Psoas muscle (tissue), 8 donors: ENCODE measurements at regions of chr1 and their contacts with region 1.

Region 1: GRCh38 chr1:178310685-178311105 is 186.1 kb downstream of the CLEC20A start:
- DNase-seq: no peak
- ATAC-seq: peak; percentile 87 to 97 (median 92)
- H3K4me3 ChIP-seq: no peak overlapping the region
- H3K27ac ChIP-seq: no peak overlapping the region
- H3K4me1 ChIP-seq: peaks cover 13% of the 10 kb centered on the region
- H3K27me3 ChIP-seq: no peaks in the 10 kb centered on the region
- CTCF ChIP-seq: peak; percentile 79

Region 2: DNA sequence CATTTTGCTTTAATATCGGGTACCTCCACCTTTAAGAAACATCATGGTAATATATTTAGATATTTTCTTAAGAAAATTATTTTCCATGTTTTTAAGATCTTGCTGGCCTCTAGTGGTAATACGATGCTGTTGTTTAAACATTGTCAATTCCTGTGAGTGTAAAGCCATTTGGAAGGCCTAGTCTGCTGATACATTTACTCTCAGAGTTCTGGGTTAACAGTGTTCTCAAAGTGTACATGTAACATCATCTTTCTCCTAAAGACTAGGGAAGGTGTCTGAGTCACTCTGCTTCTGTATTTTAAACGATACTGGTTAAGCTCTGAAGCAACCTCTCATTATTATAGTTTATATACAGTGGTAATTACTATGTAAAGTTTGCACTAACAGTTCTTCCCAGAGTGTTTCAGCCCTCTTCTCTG is 27.7 kb before region 1 on chr1:
- intact Hi-C with region 1: no loop called
- DNase-seq: no peak
- ATAC-seq: peak in 1 of 4 donors; percentile 37
- H3K4me3 ChIP-seq: no peak overlapping the region
- H3K27ac ChIP-seq: no peak overlapping the region
- H3K4me1 ChIP-seq: no peaks in the 10 kb centered on the region
- H3K27me3 ChIP-seq: no peaks in the 10 kb centered on the region
- CTCF ChIP-seq: peak; percentile 46

Region 3: DNA sequence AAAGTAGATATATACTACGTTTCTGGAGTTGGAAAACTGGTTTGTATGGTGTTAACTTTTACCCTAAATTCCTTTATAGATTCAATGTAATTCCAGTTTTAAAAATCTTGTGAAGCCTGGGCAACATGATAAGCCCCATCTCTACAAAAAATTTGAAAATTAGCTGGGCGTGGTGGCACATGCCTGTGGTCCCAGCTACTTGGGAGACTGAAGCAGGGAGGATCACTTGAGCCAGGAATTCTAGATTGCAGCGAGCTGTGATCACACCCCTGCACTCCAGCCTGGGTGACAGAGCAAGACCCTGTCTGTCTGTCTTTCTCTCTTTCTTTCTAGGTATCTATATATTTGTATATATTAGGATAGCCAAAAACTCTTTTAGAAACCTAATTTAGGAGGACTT is 44.1 kb after region 1 on chr1:
- intact Hi-C with region 1: loop called in 1 of 2 experiments (anchors 5 kb)
- DNase-seq: no peak
- ATAC-seq: no peak
- H3K4me3 ChIP-seq: no peak overlapping the region
- H3K27ac ChIP-seq: no peak overlapping the region
- H3K4me1 ChIP-seq: no peaks in the 10 kb centered on the region
- H3K27me3 ChIP-seq: no peaks in the 10 kb centered on the region
- CTCF ChIP-seq: no peak

Region 4: GRCh38 chr1:178371235-178371634 is 60.5 kb after region 1 on chr1:
- intact Hi-C with region 1: loop called in 1 of 2 experiments (anchors 5 kb)
- DNase-seq: no peak
- ATAC-seq: peak in 3 of 4 donors; percentile 43 to 75 (median 56)
- H3K4me3 ChIP-seq: peak overlapping the region; percentile 62
- H3K27ac ChIP-seq: no peak overlapping the region
- H3K4me1 ChIP-seq: peaks cover 25% of the 10 kb centered on the region
- H3K27me3 ChIP-seq: no peaks in the 10 kb centered on the region
- CTCF ChIP-seq: no peak

Region 5: DNA sequence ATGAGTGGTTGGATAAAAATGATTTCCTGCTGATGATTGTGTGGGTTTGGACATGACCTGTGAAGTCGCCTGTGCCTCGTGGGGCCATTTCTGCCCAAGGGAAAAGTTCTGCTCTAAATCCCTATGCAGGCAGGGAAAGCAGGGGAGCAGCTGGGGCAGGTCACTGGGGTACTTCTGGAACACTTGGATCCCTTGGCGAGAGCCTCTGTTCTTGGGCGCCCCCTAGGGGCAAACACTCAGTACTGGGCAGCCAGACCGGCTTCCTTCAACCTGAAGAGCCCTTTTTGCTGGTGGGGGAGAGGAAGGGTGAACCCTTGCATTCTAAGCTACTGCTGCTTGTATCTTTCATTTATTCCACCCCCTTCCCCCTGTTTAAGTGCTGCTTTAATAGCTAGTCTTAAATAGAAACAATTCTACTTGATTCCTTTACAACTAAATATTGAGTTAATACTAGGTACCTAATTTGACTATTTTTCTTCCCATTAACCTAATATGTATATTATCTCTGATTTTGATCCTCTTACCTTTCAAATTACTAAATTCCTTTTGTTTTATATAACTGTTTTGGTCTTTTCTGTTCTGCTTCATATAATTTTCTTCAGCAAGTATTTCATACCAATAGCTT is 191.1 kb after region 1 on chr1:
- intact Hi-C with region 1: loop called (anchors 2 to 10 kb)
- DNase-seq: peak; percentile 69 to 83
- ATAC-seq: peak; percentile 81 to 96 (median 91)
- H3K4me3 ChIP-seq: no peak overlapping the region
- H3K27ac ChIP-seq: no peak overlapping the region
- H3K4me1 ChIP-seq: no peaks in the 10 kb centered on the region
- H3K27me3 ChIP-seq: no peaks in the 10 kb centered on the region
- CTCF ChIP-seq: peak; percentile 87